Mammary epithelial cell (primary cell): ENCODE measurements at regions of chr1 and their contacts with region 1.

Region 1: GRCh38 chr1:229781453-229781852 is 155.4 kb downstream of the URB2 start:
- DNase-seq: no peak
- H3K4me3 ChIP-seq: no peak overlapping the region
- H3K27ac ChIP-seq: no peak overlapping the region
- H3K4me1 ChIP-seq: no peaks in the 10 kb centered on the region
- H3K27me3 ChIP-seq: no peaks in the 10 kb centered on the region
- CTCF ChIP-seq: peak in 1 of 2 donors; percentile 53

Region 2: GRCh38 chr1:229714964-229715603 is 66.4 kb before region 1 on chr1:
- CTCF ChIA-PET with region 1: no interaction called
- dilution Hi-C with region 1: loop called (anchors 5 kb)
- in situ Hi-C with region 1: no loop called
- intact Hi-C with region 1: no loop called
- DNase-seq: peak; percentile 32
- H3K4me3 ChIP-seq: no peak overlapping the region
- H3K27ac ChIP-seq: no peak overlapping the region
- H3K4me1 ChIP-seq: no peaks in the 10 kb centered on the region
- H3K27me3 ChIP-seq: no peaks in the 10 kb centered on the region
- CTCF ChIP-seq: peak; percentile 38 to 60